ENCODE measurements at regions of chr5 and their contacts with region 1.

Region 1: DNA sequence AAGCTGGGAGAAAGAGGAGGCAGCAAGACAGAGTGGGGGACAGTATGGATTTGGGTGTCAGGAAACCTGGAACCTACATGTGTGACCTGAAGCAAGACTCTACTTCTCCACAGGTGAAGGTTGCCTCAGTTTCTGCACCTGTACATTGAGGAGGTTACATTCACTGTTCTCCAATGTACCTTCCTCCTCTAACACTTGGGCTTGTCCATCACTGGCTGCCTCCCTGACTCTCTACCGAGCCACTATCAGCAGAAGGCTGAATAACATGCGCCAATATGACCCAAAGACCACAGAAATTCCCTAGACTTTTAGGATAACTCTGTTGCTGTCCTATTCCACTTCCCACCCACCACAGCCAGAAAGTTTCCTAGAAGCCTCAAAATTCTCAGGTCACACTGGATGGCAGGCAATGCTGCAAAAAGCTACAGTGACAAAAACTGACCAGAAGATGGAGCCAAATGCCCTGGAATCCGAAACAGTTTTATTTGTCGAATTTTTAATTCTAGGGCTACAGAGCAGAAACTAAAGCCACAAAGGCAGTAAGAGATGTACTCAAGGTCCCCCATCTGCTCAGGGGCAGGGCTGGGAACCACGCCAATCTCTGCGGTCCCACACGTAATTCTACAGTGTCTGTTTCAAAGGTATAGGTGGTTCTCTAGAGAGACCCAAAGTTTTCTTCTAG is 64.4 kb downstream of the FAM114A2 start:
- DNase-seq: peak; percentile 18
- ATAC-seq: peak; percentile 76
- H3K4me3 ChIP-seq: no peak overlapping the region
- H3K27ac ChIP-seq: no peak overlapping the region
- H3K4me1 ChIP-seq: no peaks in the 10 kb centered on the region
- H3K27me3 ChIP-seq: peaks cover 10% of the 10 kb centered on the region
- CTCF ChIP-seq: peak; percentile 85

Region 2: GRCh38 chr5:153987306-153987705 is 13.0 kb after region 1 on chr5:
- CTCF ChIA-PET with region 1: no interaction called
- POLR2A ChIA-PET with region 1: no interaction called
- in situ Hi-C with region 1: no loop called
- intact Hi-C with region 1: no loop called
- DNase-seq: no peak
- ATAC-seq: no peak
- H3K4me3 ChIP-seq: no peak overlapping the region
- H3K27ac ChIP-seq: no peak overlapping the region
- H3K4me1 ChIP-seq: no peaks in the 10 kb centered on the region
- H3K27me3 ChIP-seq: no peaks in the 10 kb centered on the region
- CTCF ChIP-seq: no peak

Region 3: DNA sequence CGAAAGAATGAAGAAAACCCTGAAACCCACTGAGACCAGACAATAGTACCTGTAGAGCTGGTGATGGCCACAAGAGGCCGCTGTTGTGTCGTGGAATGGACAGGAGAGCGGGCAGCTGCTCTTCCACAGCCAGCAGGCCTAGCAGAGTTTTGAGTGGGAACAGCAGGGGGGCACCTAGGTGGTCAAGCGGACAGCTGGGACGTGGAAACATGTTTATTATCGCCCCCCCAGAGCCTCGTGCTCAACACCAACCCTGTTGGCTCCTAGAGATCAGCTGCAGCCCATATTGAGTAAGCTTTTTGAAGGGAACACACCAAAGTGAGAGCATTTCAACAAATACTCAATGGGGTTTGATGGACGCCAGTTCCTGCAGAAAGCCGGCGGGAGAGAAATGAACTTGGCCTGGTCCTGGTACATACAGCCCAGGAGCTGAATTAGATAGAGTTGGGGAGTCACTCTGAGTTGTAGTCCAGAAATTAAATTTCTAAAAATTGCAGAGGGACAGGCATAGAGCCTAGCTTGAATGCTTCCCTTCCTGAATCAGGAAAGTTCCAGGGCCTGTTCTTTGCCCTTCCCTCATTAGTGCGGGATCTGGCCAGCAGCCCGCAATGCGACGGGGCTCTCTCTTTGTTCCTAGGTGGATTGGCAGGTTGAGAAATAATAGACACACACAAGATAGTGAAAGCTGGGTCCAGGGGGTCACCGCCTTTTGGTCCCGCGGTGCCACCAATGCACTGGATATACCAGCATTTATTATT is 98.3 kb after region 1 on chr5:
- CTCF ChIA-PET with region 1: interaction called, 8 read pairs
- POLR2A ChIA-PET with region 1: no interaction called
- in situ Hi-C with region 1: no loop called
- intact Hi-C with region 1: loop called (anchors 1 kb)
- DNase-seq: peak; percentile 58
- ATAC-seq: peak; percentile 96
- H3K4me3 ChIP-seq: peak overlapping the region; percentile 6 to 7; a peak in 2 of 4 replicates
- H3K27ac ChIP-seq: no peak overlapping the region
- H3K4me1 ChIP-seq: no peaks in the 10 kb centered on the region
- H3K27me3 ChIP-seq: peaks cover 2% of the 10 kb centered on the region
- CTCF ChIP-seq: peak; percentile 91

Region 4: GRCh38 chr5:154179846-154180710 is 205.8 kb after region 1 on chr5:
- CTCF ChIA-PET with region 1: no interaction called
- POLR2A ChIA-PET with region 1: no interaction called
- in situ Hi-C with region 1: no loop called
- intact Hi-C with region 1: loop called (anchors 2 kb)
- DNase-seq: no peak
- ATAC-seq: peak; percentile 98
- H3K4me3 ChIP-seq: no peak overlapping the region
- H3K27ac ChIP-seq: no peak overlapping the region
- H3K4me1 ChIP-seq: no peaks in the 10 kb centered on the region
- H3K27me3 ChIP-seq: peaks cover 10% of the 10 kb centered on the region
- CTCF ChIP-seq: peak; percentile 87

Region 5: DNA sequence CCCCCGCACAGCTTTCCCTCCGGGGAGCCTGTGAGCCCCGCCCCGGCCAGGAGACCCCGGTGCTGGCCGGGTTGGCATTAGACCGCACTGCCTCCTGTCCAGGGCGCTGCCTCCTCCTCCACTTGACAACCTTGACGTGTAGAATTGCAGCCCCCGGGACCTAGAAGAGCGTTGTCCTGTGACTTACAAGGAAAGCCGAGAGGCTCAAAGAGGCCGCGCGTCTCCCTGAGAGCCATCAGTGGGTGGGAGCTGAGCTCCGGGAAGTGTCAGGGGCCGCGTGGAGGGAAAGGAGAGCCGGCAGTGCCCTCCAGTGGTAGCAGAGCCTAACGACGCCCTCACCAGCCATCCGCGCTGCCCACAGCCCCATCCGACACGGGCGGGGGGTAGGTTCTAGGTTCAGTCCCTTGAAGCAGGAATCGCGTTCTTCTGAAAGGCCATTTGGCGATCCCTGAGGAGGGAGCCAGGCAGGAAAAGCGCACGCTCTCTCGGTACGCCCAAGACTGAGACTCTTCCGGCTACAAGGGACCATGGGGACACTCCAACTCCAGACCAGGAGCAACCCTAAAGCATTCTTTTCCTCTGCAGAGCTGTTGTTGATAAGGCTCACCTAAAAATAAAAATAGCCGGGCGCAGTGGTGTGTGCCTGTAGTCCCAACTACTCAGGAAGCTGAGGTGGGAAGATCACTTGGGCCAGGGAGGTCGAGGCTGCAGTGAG is 431.0 kb after region 1 on chr5:
- CTCF ChIA-PET with region 1: interaction called, 3 read pairs
- POLR2A ChIA-PET with region 1: no interaction called
- in situ Hi-C with region 1: no loop called
- intact Hi-C with region 1: loop called (anchors 10 kb)
- DNase-seq: peak; percentile 30
- ATAC-seq: peak; percentile 96
- H3K4me3 ChIP-seq: peak overlapping the region; percentile 8 to 42; a peak in 3 of 4 replicates
- H3K27ac ChIP-seq: no peak overlapping the region
- H3K4me1 ChIP-seq: no peaks in the 10 kb centered on the region
- H3K27me3 ChIP-seq: no peaks in the 10 kb centered on the region
- CTCF ChIP-seq: peak; percentile 91

Region 6: GRCh38 chr5:154603978-154604679 is 629.9 kb after region 1 on chr5:
- CTCF ChIA-PET with region 1: no interaction called
- POLR2A ChIA-PET with region 1: no interaction called
- in situ Hi-C with region 1: no loop called
- intact Hi-C with region 1: loop called (anchors 10 kb)
- DNase-seq: no peak
- ATAC-seq: peak; percentile 59
- H3K4me3 ChIP-seq: 0 out of 4 replicates have a peak overlapping the region, but pooled peaks of 1 of the 2 experiments have one; percentile 2
- H3K27ac ChIP-seq: no peak overlapping the region
- H3K4me1 ChIP-seq: 0 out of 2 replicates have a peak, but pooled peaks cover 6% of the 10 kb centered on the region
- H3K27me3 ChIP-seq: no peaks in the 10 kb centered on the region
- CTCF ChIP-seq: no peak

Region 7: GRCh38 chr5:154630410-154630809 is 656.1 kb after region 1 on chr5:
- CTCF ChIA-PET with region 1: no interaction called
- POLR2A ChIA-PET with region 1: no interaction called
- in situ Hi-C with region 1: no loop called
- intact Hi-C with region 1: loop called (anchors 10 kb)
- DNase-seq: no peak
- ATAC-seq: no peak
- H3K4me3 ChIP-seq: no peak overlapping the region
- H3K27ac ChIP-seq: no peak overlapping the region
- H3K4me1 ChIP-seq: no peaks in the 10 kb centered on the region
- H3K27me3 ChIP-seq: 0 out of 2 replicates have a peak, but pooled peaks cover 1% of the 10 kb centered on the region
- CTCF ChIP-seq: no peak

Measured in Panc1 (cell line).